Activated CD8-positive, alpha-beta T cell treated with anti-CD3 and anti-CD28 coated beads, Interleukin-2, amount 10 ng/mL, durations not matched to agents 7 days and 5 days (primary cell): ENCODE measurements at regions of chr3 and their contacts with region 1.

Region 1: GRCh38 chr3:42581709-42582473 is at the start of gene SEC22C:
- DNase-seq: peak; percentile 97
- ATAC-seq: peak; percentile 93
- H3K4me3 Mint-ChIP-seq: peak within 1 kb of the TSS; percentile 87
- H3K27ac Mint-ChIP-seq: peak within 1 kb of the TSS; percentile 91
- H3K4me1 Mint-ChIP-seq: peaks cover 46% of the 10 kb centered on the region
- H3K27me3 Mint-ChIP-seq: no peaks in the 10 kb centered on the region
- total RNA-seq, gene SEC22C: 49.3 to 51.4 TPM

Region 2: GRCh38 chr3:42430781-42431532 is 150.9 kb before region 1 on chr3:
- CTCF ChIA-PET with region 1: no interaction called
- POLR2A ChIA-PET with region 1: no interaction called
- DNase-seq: no peak
- ATAC-seq: no peak
- H3K4me3 Mint-ChIP-seq: no peak overlapping the region
- H3K27ac Mint-ChIP-seq: no peak overlapping the region
- H3K4me1 Mint-ChIP-seq: no peaks in the 10 kb centered on the region
- H3K27me3 Mint-ChIP-seq: peaks cover 6% of the 10 kb centered on the region

Region 3: GRCh38 chr3:42600111-42600988 is 18.5 kb after region 1 on chr3 and contains the start of gene NKTR:
- CTCF ChIA-PET with region 1: interaction called, 25 read pairs
- POLR2A ChIA-PET with region 1: interaction called, 32 read pairs
- DNase-seq: peak; percentile 99
- ATAC-seq: peak; percentile 91
- H3K4me3 Mint-ChIP-seq: peak within 1 kb of the TSS; percentile 94
- H3K27ac Mint-ChIP-seq: peak within 1 kb of the TSS; percentile 99
- H3K4me1 Mint-ChIP-seq: peaks cover 31% of the 10 kb centered on the region
- H3K27me3 Mint-ChIP-seq: no peaks in the 10 kb centered on the region
- total RNA-seq, gene NKTR: 85.9 to 90.3 TPM

Region 4: GRCh38 chr3:42635111-42635510 is 53.2 kb after region 1 on chr3:
- CTCF ChIA-PET with region 1: interaction called, 21 read pairs
- POLR2A ChIA-PET with region 1: no interaction called
- DNase-seq: no peak
- ATAC-seq: no peak
- H3K4me3 Mint-ChIP-seq: no peak overlapping the region
- H3K27ac Mint-ChIP-seq: peak overlapping the region; percentile 23
- H3K4me1 Mint-ChIP-seq: peaks cover 2% of the 10 kb centered on the region
- H3K27me3 Mint-ChIP-seq: no peaks in the 10 kb centered on the region

Region 5: GRCh38 chr3:42652611-42653302 is 70.9 kb after region 1 on chr3:
- CTCF ChIA-PET with region 1: interaction called, 11 read pairs
- POLR2A ChIA-PET with region 1: no interaction called
- DNase-seq: peak; percentile 21
- ATAC-seq: peak; percentile 32
- H3K4me3 Mint-ChIP-seq: peak overlapping the region; percentile 27
- H3K27ac Mint-ChIP-seq: peak overlapping the region; percentile 18
- H3K4me1 Mint-ChIP-seq: peaks cover 22% of the 10 kb centered on the region
- H3K27me3 Mint-ChIP-seq: peaks cover 2% of the 10 kb centered on the region